ENCODE measurements at regions of chr5 and their contacts with region 1.

Region 1: GRCh38 chr5:136062366-136063274 is 33.8 kb downstream of the TGFBI start:
- DNase-seq: peak in 1 of 5 donors; percentile 18
- ATAC-seq: peak in 1 of 4 donors; percentile 29
- H3K4me3 ChIP-seq: no peak overlapping the region
- H3K27ac ChIP-seq: no peak overlapping the region
- H3K4me1 ChIP-seq: peaks cover 0 to 42% (median 13%) of the 10 kb centered on the region in 12 donors
- H3K27me3 ChIP-seq: no peaks in the 10 kb centered on the region
- CTCF ChIP-seq: peak in 11 of 12 donors; percentile 37 to 60 (median 49)
- POLR2A ChIP-seq: no peak

Region 2: DNA sequence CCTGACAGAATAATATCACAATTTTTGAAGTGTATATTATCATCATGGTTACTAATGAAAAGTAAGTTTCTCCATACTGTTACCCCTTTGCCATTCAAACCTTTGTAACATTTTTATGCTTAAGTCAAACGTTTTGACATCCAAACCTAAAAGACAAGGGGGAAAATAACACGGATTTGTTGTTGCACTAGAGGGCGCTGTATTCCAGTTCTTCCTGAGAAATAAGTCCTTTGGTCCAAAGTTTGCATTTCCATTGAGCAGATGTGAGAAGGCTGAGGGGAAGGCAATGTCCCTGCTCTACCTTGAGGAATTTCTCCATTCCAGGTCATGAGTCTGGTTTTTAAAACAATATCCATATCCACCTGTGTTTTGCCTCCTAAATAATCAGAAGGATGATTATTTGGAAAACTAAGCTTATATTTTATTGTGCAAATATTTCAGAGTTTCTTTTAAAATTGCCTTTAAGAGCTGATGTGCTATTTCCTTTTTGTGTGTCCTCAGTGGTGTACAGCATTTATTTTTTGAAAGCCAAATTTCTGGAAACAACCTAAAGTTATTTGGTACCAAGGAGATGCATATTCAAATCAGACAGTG is 117.6 kb before region 1 on chr5:
- intact Hi-C with region 1: loop called (anchors 1 to 5 kb)
- DNase-seq: peak in 4 of 5 donors; percentile 28 to 56 (median 41)
- ATAC-seq: peak in 3 of 4 donors; percentile 46 to 59 (median 58)
- H3K4me3 ChIP-seq: no peak overlapping the region
- H3K27ac ChIP-seq: no peak overlapping the region
- H3K4me1 ChIP-seq: no peaks in the 10 kb centered on the region
- H3K27me3 ChIP-seq: peaks cover 0 to 11% (median 0%) of the 10 kb centered on the region in 9 donors
- CTCF ChIP-seq: peak; percentile 61 to 87 (median 80)
- POLR2A ChIP-seq: no peak

Region 3: GRCh38 chr5:135964670-135965320 is 97.8 kb before region 1 on chr5:
- intact Hi-C with region 1: loop called in 1 of 10 experiments (anchors 5 kb)
- DNase-seq: no peak
- ATAC-seq: peak in 1 of 4 donors; percentile 45
- H3K4me3 ChIP-seq: no peak overlapping the region
- H3K27ac ChIP-seq: no peak overlapping the region
- H3K4me1 ChIP-seq: peaks cover 0 to 5% (median 0%) of the 10 kb centered on the region in 12 donors
- H3K27me3 ChIP-seq: no peaks in the 10 kb centered on the region
- CTCF ChIP-seq: peak in 3 of 12 donors; percentile 6 to 37 (median 12)
- POLR2A ChIP-seq: no peak

Region 4: DNA sequence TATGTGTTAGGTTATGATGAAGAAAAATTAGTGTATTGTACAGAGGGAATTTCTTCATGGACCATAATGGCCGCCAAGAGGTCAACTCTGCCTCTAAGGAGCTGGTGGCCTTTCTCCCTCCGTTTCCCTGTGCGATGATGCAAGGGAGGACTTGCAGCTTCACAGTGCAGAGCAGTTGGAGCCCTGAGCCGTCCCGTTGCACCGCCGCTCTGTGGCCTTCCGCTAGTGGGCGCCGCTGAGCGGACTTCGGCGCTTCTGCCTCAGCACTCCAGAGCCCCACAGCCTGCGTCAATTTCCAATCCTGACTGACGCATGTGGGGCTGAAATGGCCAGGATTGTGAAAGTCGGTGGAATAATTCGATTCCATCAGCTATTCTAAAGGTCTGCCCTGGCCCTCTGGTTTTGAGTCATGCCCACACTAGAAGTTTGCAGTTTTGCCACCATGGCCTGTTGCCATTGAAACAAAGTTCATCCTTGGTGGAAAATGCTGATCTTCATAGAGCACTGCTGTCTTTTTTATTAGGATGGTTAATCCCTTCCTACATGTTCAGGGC is 85.2 kb before region 1 on chr5:
- intact Hi-C with region 1: loop called in 5 of 10 experiments (anchors 5 to 10 kb)
- DNase-seq: peak; percentile 54 to 88 (median 71)
- ATAC-seq: peak; percentile 60 to 94 (median 79)
- H3K4me3 ChIP-seq: no peak overlapping the region
- H3K27ac ChIP-seq: peak overlapping the region in 1 of 12 donors; percentile 5
- H3K4me1 ChIP-seq: peaks cover 0 to 44% (median 22%) of the 10 kb centered on the region in 12 donors
- H3K27me3 ChIP-seq: no peaks in the 10 kb centered on the region
- CTCF ChIP-seq: peak; percentile 36 to 66 (median 52)
- POLR2A ChIP-seq: no peak

Region 5: DNA sequence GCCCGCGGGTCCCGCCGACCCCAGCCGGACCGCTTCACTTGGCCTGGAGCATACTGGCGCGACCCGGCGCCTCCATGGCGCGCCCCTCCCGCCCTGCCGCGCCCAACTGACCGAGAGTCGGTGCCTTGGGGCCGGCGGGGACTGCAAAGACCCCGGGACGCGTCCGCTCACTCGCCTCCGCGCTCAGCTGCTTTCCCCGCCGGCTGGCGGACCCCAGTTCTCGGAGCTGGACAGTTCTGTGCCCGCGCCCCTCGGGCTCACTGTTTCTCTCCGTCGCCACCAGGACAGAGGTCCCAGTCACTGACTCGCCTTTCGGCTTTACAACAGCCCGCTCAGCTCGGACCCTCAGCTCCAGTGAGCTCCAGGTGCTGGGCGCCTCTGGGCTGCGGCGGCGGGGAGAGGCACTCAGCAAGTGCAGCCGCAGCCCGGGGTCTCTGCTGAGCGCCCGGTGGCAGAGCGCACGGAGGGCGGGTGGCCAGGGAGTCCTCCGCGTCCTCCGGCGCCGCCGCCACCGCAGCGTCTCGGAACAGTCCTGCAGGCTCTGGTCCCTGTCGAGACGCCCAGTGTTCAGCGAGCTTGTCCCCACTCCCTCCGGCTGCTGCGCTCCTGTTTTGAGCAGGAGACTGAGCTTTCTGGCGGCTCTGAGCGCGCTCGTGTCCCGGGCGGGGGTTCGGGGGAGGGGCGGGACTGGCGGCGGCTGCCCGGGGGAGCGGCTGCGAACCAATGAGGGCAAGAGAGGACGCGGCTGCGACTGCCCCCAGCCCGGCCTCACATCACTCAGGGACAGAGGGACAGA is 130.1 kb after region 1 on chr5 and contains the start of gene SMIM32:
- intact Hi-C with region 1: no loop called
- DNase-seq: peak in 1 of 5 donors; percentile 32
- ATAC-seq: peak in 3 of 4 donors; percentile 40 to 63 (median 60)
- H3K4me3 ChIP-seq: peak within 1 kb of the TSS; percentile 28 to 66 (median 50)
- H3K27ac ChIP-seq: no peak within 1 kb of the TSS
- H3K4me1 ChIP-seq: peaks cover 0 to 28% (median 15%) of the 10 kb centered on the region in 12 donors
- H3K27me3 ChIP-seq: peaks cover 9 to 40% (median 37%) of the 10 kb centered on the region in 9 donors
- CTCF ChIP-seq: no peak
- POLR2A ChIP-seq: no peak
- total RNA-seq, gene SMIM32: not detected

Region 6: GRCh38 chr5:136212252-136212721 is 149.7 kb after region 1 on chr5:
- intact Hi-C with region 1: loop called in 1 of 10 experiments (anchors 5 kb)
- DNase-seq: peak; percentile 41 to 76 (median 60)
- ATAC-seq: peak in 2 of 4 donors; percentile 56 to 77
- H3K4me3 ChIP-seq: no peak overlapping the region
- H3K27ac ChIP-seq: no peak overlapping the region
- H3K4me1 ChIP-seq: no peaks in the 10 kb centered on the region
- H3K27me3 ChIP-seq: peaks cover 0 to 40% (median 9%) of the 10 kb centered on the region in 9 donors
- CTCF ChIP-seq: peak; percentile 73 to 96 (median 84)
- POLR2A ChIP-seq: no peak

Region 7: GRCh38 chr5:136356747-136357469 is 294.3 kb after region 1 on chr5:
- intact Hi-C with region 1: no loop called
- DNase-seq: peak in 1 of 5 donors; percentile 56
- ATAC-seq: no peak
- H3K4me3 ChIP-seq: no peak overlapping the region
- H3K27ac ChIP-seq: no peak overlapping the region
- H3K4me1 ChIP-seq: no peaks in the 10 kb centered on the region
- H3K27me3 ChIP-seq: peaks cover 0 to 5% (median 0%) of the 10 kb centered on the region in 9 donors
- CTCF ChIP-seq: no peak
- POLR2A ChIP-seq: no peak